ENCODE measurements at regions of chr3 and their contacts with region 1.

Region 1: DNA sequence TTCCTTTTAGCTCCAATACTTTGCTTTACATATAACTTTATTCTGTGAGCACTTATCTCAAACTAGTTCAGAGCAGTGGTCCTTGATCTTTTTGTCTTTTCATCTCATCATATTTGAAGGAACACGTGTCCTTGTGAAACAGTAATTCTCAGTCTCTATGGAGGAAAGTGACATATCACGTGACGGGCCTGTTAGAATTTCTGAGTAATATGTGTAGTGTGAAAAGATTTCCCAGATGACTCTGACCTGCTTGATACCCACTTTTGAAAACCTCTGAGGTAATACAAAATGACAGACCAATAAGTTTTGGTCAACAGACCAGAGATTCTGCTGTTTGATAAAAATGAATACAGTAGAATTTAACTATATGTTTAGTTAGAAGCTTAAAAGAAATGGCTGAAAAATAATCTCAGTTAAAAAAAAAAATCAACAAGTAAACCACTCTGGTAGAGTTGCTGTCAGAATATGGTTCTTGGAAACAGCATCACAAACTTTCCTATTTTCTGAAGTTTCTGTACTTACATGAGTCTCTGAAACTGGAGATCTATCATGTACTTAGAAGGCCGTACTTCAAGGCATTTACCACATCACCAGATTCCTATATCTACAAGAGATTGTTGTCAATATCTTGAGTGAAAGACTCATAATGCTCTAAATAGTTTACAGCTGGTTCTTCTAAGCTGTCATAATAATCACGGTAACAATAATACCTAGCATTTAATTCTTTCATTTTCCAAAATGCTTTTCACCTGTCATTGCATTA is 590.2 kb upstream of the TBL1XR1 start:
- DNase-seq: no peak
- H3K4me3 Mint-ChIP-seq: no peak overlapping the region
- H3K27ac Mint-ChIP-seq: peak overlapping the region; percentile 34
- H3K4me1 Mint-ChIP-seq: peaks cover 14% of the 10 kb centered on the region
- H3K27me3 Mint-ChIP-seq: no peaks in the 10 kb centered on the region

Region 2: GRCh38 chr3:176971613-176972174 is 815.8 kb before region 1 on chr3:
- intact Hi-C with region 1: loop called (anchors 1 kb)
- DNase-seq: peak; percentile 11
- H3K4me3 Mint-ChIP-seq: no peak overlapping the region
- H3K27ac Mint-ChIP-seq: peak overlapping the region; percentile 71
- H3K4me1 Mint-ChIP-seq: peaks cover 8% of the 10 kb centered on the region
- H3K27me3 Mint-ChIP-seq: no peaks in the 10 kb centered on the region

Region 3: DNA sequence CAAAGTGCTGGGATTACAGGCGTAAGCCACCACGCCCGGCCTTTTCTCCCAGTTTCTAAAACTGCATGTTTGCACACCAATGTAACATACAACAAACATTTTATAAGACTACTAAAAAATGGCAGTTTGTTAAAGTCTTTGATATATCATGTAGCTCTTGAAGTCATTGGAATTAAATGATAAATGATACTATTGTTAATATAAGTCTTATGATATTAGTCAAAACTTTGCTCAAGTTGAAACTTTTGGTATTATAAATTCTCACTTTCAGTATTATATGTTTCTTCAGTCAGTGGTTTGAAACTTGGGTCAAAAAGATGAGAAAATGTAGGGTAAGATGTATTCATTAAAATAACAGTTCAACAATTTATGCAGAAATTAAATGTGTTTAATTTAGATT is 472.6 kb before region 1 on chr3:
- intact Hi-C with region 1: loop called (anchors 5 kb)
- DNase-seq: no peak
- H3K4me3 Mint-ChIP-seq: no peak overlapping the region
- H3K27ac Mint-ChIP-seq: no peak overlapping the region
- H3K4me1 Mint-ChIP-seq: peaks cover 15% of the 10 kb centered on the region
- H3K27me3 Mint-ChIP-seq: peaks cover 3% of the 10 kb centered on the region

Region 4: DNA sequence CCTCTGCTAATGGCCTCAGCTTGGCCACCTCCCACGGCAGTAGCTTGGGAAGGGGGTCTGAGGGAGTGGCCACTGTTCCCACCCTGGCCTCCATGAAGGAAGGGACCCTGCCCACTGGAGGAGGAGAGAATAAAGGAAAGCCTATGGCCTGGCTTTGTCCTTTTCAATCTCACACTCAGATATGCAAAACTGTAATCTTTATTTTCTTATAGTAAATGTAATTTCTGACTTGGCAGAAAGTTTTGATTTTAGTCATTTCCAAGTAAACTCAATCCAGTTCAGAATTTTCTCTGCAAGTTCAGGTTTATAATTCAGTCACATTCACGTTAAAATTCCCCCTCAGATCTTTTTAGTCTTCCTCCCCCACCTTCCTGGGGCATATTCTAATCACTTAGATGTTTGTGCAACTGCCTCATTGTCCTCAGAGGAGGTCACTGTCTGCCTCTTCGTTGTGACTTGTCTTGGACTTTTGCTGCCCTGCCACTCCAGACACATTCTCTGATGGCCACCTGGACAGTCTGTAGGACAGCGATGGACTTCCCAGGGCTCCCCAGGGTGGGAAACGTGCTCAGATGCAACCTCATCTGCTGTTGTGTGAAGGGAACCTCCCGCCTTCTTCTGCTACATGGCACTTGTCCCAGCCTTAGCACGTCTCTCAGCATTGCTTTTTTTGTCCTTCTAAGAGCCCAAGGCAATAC is 367.4 kb before region 1 on chr3:
- intact Hi-C with region 1: loop called (anchors 1 kb)
- DNase-seq: no peak
- H3K4me3 Mint-ChIP-seq: peak overlapping the region; percentile 19
- H3K27ac Mint-ChIP-seq: peak overlapping the region; percentile 53
- H3K4me1 Mint-ChIP-seq: peaks cover 26% of the 10 kb centered on the region
- H3K27me3 Mint-ChIP-seq: peaks cover 1% of the 10 kb centered on the region

Region 5: DNA sequence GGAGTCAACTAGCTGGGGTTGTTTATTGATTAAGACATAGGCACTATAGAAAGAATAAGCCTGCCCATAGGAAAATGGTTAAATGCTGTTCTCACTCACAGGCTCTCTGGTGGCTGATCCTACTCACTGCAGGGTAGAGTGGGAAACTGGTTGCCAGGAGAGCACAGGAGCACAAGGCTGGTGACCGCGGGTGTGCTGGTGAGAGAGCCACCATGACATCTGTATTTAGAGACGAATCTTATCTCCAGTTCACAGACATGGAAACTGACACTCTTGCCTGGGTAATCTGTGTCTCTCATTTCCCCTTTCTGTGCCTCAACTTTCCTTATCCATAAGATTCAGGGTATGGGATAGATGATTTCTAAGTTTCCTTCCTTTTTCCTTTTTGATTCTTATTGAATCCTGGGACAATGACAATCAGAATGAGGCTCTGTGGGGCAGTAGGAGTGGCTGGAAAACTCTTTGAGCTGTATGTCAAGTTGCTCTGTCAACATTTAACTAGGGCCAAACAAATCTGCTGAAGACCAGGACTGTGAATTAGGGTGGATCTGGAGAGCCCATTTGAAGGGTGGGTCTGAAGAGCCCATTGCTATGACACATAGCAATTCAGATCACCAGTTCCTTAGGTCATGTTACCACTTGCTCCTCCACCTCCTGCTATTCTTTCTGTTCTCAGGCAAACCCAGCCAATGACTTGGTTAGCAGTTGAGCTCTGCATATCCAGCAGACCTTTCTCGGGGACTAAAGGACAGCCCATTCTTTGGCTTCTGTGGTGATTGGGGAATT is 304.1 kb before region 1 on chr3:
- intact Hi-C with region 1: no loop called
- DNase-seq: no peak
- H3K4me3 Mint-ChIP-seq: no peak overlapping the region
- H3K27ac Mint-ChIP-seq: no peak overlapping the region
- H3K4me1 Mint-ChIP-seq: no peaks in the 10 kb centered on the region
- H3K27me3 Mint-ChIP-seq: no peaks in the 10 kb centered on the region

Region 6: DNA sequence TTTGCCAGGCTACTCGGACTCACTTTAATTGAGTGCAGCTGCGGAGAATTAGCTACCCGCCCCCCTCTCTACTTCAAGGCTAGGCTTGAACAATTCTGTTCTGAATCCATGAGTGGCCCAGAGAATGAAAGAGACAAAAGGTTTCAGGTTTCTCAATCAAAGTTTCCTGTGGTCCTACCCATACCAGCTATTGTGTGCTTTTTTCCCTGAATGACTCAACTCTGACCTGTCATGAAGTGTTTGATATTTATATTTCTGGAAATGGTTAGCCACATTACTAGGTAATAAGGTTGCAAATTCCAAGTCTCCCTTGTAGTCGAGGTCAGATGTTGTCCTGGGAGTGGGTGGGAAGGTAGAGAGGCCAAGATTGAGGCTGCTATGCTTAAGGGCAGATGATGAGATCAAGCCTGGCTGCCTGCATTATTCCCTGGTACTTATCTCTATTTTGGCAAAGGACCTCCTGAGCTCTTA is 197.5 kb before region 1 on chr3:
- intact Hi-C with region 1: loop called (anchors 5 kb)
- DNase-seq: no peak
- H3K4me3 Mint-ChIP-seq: no peak overlapping the region
- H3K27ac Mint-ChIP-seq: no peak overlapping the region
- H3K4me1 Mint-ChIP-seq: peaks cover 34% of the 10 kb centered on the region
- H3K27me3 Mint-ChIP-seq: no peaks in the 10 kb centered on the region

Region 7: DNA sequence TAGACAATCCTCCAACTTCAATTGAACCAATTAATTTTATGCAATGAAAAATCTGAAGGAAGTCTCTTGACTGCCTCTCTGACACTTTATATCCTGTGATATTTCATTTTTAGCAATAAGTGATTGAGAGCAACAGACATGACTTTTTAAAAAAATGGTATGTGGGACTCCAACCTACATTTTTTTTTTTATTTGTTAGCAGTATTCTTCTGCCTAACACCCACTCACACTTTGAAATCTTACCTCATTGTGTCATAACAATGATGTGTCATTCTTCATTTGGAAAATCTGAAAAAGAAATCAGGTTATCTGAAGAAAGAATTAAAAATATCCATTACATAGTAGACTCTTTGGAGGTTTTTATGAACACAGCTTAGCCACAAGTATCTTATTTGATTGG is 207.5 kb after region 1 on chr3:
- intact Hi-C with region 1: loop called (anchors 1 kb)
- DNase-seq: no peak
- H3K4me3 Mint-ChIP-seq: no peak overlapping the region
- H3K27ac Mint-ChIP-seq: peak overlapping the region; percentile 75
- H3K4me1 Mint-ChIP-seq: peaks cover 21% of the 10 kb centered on the region
- H3K27me3 Mint-ChIP-seq: no peaks in the 10 kb centered on the region

Region 8: GRCh38 chr3:178170698-178171535 is 383.5 kb after region 1 on chr3:
- intact Hi-C with region 1: no loop called
- DNase-seq: no peak
- H3K4me3 Mint-ChIP-seq: no peak overlapping the region
- H3K27ac Mint-ChIP-seq: no peak overlapping the region
- H3K4me1 Mint-ChIP-seq: no peaks in the 10 kb centered on the region
- H3K27me3 Mint-ChIP-seq: no peaks in the 10 kb centered on the region

Measured in activated T-helper 1 cell treated with anti-CD3 and anti-CD28 coated beads, Interleukin-12 subunit alpha, Interleukin-12 subunit beta, Interleukin-2, Interleukin-4 antibody, amounts not matched to agents 30 ng/mL and 10 ng/mL and 1 ng/mL, durations not matched to agents 14 hours and 24 hours and 36 hours (primary cell).